ENCODE measurements at regions of chr2 and their contacts with region 1.

Region 1: GRCh38 chr2:206800506-206801417 is 35.4 kb downstream of the FASTKD2 start:
- DNase-seq: peak; percentile 49
- ATAC-seq: peak; percentile 88

Region 2: DNA sequence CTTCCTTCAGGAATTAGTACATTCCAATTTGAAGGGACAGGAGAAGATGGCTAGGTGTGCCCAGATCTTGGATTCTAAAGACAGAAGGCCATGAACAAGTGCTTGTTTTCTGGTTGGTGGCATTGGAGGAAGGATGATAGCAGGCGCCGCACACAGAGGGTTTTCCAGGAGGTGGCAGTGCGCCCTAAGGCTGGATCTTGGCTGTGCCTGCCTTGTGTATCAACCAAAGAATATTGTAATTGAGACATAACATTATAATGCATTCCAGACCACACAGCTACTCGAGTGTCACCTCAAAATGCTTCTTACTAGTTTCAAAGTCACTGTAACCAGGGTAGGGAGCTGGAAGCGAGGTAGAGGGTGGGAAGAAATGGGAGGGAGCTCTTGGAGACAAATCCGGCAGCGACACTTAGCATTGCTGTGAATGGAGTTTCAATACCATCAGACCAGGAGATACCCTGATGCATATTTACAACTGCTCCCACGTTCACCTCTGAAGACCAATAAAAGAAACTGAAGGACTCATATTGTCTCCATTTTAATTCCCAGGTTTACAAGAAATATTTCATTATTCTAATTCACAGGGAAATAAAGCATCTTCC is 181.1 kb after region 1 on chr2:
- intact Hi-C with region 1: loop called (anchors 5 kb)
- DNase-seq: peak; percentile 84
- ATAC-seq: peak; percentile 93